MCF 10A (cell line): ENCODE measurements at regions of chr6 and their contacts with region 1.

Region 1: DNA sequence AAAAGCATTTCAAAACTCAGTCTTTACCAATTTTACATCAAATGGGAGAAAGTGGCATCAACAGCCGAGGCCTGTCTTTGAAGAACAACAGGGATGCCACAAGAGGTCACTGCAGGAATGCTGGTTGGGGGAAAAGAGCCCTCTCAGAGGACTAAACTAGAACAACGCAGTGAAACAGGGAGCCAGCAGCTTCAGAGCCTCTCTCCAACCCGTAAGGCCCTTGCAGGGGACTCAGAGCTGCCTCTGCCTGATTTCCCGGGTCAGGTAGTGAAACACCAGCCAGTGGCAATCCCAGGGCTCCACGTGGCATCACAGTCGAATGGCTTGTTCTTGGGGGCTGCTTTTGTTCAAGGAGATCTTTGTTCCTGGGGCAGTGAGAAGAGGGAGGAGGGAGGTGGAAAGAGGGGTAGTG is 55.0 kb upstream of the KCNK16 start:
- DNase-seq: peak; percentile 73
- H3K4me3 Mint-ChIP-seq: no peak overlapping the region
- H3K27ac Mint-ChIP-seq: no peak overlapping the region
- H3K4me1 Mint-ChIP-seq: peaks cover 5% of the 10 kb centered on the region
- H3K27me3 Mint-ChIP-seq: no peaks in the 10 kb centered on the region
- CTCF ChIP-seq: peak; percentile 86

Region 2: DNA sequence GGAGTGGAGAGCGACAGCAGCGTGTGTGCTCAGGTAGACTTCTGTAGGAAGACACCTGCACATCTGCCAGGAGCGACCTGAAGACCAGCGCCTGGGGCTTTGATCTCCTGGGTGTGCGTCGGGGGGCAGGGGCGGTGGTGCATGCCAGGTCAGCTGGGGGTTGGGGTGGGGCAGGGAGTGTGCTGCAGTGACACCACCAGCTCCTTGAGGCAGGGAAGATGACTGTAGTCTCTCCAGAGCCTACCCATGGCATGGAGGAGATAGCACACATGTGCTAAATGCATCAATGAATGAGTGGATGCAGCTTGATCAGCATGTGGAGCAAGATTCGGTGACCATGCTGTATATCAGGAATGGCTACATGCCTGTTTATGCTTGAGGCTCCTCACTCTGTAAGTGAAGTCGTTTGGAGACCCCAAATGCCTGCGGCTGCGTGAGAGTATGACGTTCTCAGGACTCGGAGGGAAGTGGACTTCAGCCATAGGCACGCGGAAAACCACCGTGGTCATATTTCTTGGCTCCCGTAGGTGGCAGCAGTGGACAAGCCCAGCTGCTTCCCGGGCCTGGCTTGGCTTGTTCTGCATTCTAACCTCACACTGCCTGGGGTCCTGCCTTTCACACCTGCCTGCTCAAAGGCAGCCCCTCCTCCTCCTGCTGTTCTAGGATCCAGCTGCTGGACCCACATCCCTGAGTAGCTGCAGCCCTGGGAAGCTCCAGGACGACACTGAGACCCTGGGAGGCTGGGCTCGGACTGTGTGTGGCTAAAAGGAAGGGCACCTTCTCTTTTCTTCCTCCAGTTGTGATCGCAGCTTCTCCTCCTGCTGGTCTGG is 15.7 kb before region 1 on chr6:
- CTCF ChIA-PET with region 1: interaction called, 13 read pairs
- POLR2A ChIA-PET with region 1: no interaction called
- intact Hi-C with region 1: loop called (anchors 1 kb)
- DNase-seq: peak; percentile 70
- H3K4me3 Mint-ChIP-seq: no peak overlapping the region
- H3K27ac Mint-ChIP-seq: no peak overlapping the region
- H3K4me1 Mint-ChIP-seq: peaks cover 14% of the 10 kb centered on the region
- H3K27me3 Mint-ChIP-seq: no peaks in the 10 kb centered on the region
- CTCF ChIP-seq: peak; percentile 78

Region 3: DNA sequence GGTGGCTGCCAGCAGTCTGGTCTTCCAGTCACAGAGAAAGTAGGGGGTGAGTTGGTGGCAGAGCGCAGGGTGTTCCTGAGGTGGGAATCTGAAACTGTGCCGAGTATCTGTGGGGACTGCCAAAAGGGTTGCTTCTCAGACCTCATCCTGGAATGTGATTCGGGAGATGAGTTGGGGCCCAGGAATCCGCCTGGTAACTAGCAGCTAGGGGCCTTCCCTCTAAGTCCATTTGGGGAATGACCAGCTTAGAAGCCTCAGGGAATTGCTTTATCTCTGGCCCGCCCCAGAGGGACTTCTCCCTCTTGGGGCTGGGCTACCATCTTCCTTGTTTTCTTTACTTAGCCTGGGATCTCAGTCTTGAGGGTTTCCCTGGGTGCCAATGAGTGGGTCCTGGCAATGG is 507.2 kb after region 1 on chr6:
- CTCF ChIA-PET with region 1: interaction called, 11 read pairs
- POLR2A ChIA-PET with region 1: no interaction called
- intact Hi-C with region 1: no loop called
- DNase-seq: no peak
- H3K4me3 Mint-ChIP-seq: no peak overlapping the region
- H3K27ac Mint-ChIP-seq: no peak overlapping the region
- H3K4me1 Mint-ChIP-seq: peaks cover 4% of the 10 kb centered on the region
- H3K27me3 Mint-ChIP-seq: no peaks in the 10 kb centered on the region
- CTCF ChIP-seq: no peak